Sigmoid colon (tissue), 7 donors: ENCODE measurements at regions of chr9 and their contacts with region 1.

Region 1: GRCh38 chr9:128863647-128864046 is 18.1 kb downstream of the KYAT1 start:
- DNase-seq: peak; percentile 88
- H3K4me3 ChIP-seq: no peak overlapping the region
- H3K27ac ChIP-seq: no peak overlapping the region
- H3K4me1 ChIP-seq: no peaks in the 10 kb centered on the region
- H3K27me3 ChIP-seq: no peaks in the 10 kb centered on the region
- CTCF ChIP-seq: peak; percentile 85 to 100 (median 94)
- EP300 ChIP-seq: no peak
- POLR2A ChIP-seq: no peak

Region 2: GRCh38 chr9:128927731-128928411 is 64.2 kb after region 1 on chr9:
- intact Hi-C with region 1: loop called (anchors 1 kb)
- DNase-seq: no peak
- H3K4me3 ChIP-seq: no peak overlapping the region
- H3K27ac ChIP-seq: no peak overlapping the region
- H3K4me1 ChIP-seq: peaks cover 0 to 12% (median 5%) of the 10 kb centered on the region in 4 donors
- H3K27me3 ChIP-seq: no peaks in the 10 kb centered on the region
- CTCF ChIP-seq: peak; percentile 83 to 88 (median 86)
- EP300 ChIP-seq: no peak
- POLR2A ChIP-seq: no peak